Activated B cell treated with CpG ODN at 0.5 μM for 24 hours (primary cell): ENCODE measurements at regions of chr3 and their contacts with region 1.

Region 1: GRCh38 chr3:119240591-119241434 is at the start of gene B4GALT4:
- DNase-seq: peak; percentile 78
- ATAC-seq: peak; percentile 86
- H3K4me3 Mint-ChIP-seq: peak within 1 kb of the TSS; percentile 87
- H3K27ac Mint-ChIP-seq: peak within 1 kb of the TSS; percentile 82
- H3K4me1 Mint-ChIP-seq: peaks cover 36% of the 10 kb centered on the region
- H3K27me3 Mint-ChIP-seq: no peaks in the 10 kb centered on the region
- CTCF ChIP-seq: no peak
- total RNA-seq, gene B4GALT4: 13.8 and 18.0 TPM in 2 replicates

Region 2: GRCh38 chr3:117463276-117464115 is 1777.3 kb before region 1 on chr3:
- CTCF ChIA-PET with region 1: no interaction called
- POLR2A ChIA-PET with region 1: no interaction called
- intact Hi-C with region 1: no loop called
- DNase-seq: no peak
- ATAC-seq: no peak
- H3K4me3 Mint-ChIP-seq: no peak overlapping the region
- H3K27ac Mint-ChIP-seq: no peak overlapping the region
- H3K4me1 Mint-ChIP-seq: no peaks in the 10 kb centered on the region
- H3K27me3 Mint-ChIP-seq: no peaks in the 10 kb centered on the region
- CTCF ChIP-seq: no peak

Region 3: DNA sequence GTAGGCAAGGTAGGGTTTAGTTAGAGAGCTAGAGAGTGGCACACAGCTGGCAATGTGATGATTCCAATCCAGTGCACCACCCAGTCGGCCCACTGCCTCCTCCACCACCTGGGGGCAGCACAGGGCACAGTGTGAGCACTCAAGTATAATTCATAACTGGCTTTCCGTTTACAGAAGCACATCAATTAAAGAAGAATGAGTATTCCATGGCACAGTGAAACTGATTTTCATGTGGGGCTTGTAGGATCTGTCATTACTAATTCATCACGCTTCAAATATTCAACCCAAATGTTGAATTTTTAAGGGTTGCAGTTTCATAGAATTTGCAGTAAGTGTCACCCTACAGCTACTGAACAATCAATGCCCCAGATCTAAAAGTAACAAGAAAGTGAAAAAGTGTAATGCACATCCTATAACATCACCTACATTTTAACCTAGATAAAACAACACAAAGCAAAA is 356.0 kb before region 1 on chr3:
- CTCF ChIA-PET with region 1: interaction called, 49 read pairs
- POLR2A ChIA-PET with region 1: interaction called, 6 read pairs
- intact Hi-C with region 1: loop called (anchors 1 kb)
- DNase-seq: peak; percentile 44
- ATAC-seq: peak; percentile 75
- H3K4me3 Mint-ChIP-seq: no peak overlapping the region
- H3K27ac Mint-ChIP-seq: no peak overlapping the region
- H3K4me1 Mint-ChIP-seq: no peaks in the 10 kb centered on the region
- H3K27me3 Mint-ChIP-seq: peaks cover 20% of the 10 kb centered on the region
- CTCF ChIP-seq: peak; percentile 74

Region 4: GRCh38 chr3:119098619-119099222 is 142.1 kb before region 1 on chr3:
- CTCF ChIA-PET with region 1: no interaction called
- POLR2A ChIA-PET with region 1: no interaction called
- intact Hi-C with region 1: loop called (anchors 1 kb)
- DNase-seq: no peak
- ATAC-seq: no peak
- H3K4me3 Mint-ChIP-seq: no peak overlapping the region
- H3K27ac Mint-ChIP-seq: no peak overlapping the region
- H3K4me1 Mint-ChIP-seq: no peaks in the 10 kb centered on the region
- H3K27me3 Mint-ChIP-seq: peaks cover 2% of the 10 kb centered on the region
- CTCF ChIP-seq: no peak

Region 5: GRCh38 chr3:119257682-119258410 is 17.0 kb after region 1 on chr3:
- CTCF ChIA-PET with region 1: interaction called, 17 read pairs
- POLR2A ChIA-PET with region 1: interaction called, 23 read pairs
- intact Hi-C with region 1: no loop called
- DNase-seq: no peak
- ATAC-seq: peak; percentile 75
- H3K4me3 Mint-ChIP-seq: peak overlapping the region; percentile 11
- H3K27ac Mint-ChIP-seq: no peak overlapping the region
- H3K4me1 Mint-ChIP-seq: peaks cover 22% of the 10 kb centered on the region
- H3K27me3 Mint-ChIP-seq: no peaks in the 10 kb centered on the region
- CTCF ChIP-seq: no peak

Region 6: GRCh38 chr3:119293871-119294695 is 53.3 kb after region 1 on chr3 and contains the start of gene ARHGAP31:
- CTCF ChIA-PET with region 1: interaction called, 4 read pairs
- POLR2A ChIA-PET with region 1: interaction called, 15 read pairs
- intact Hi-C with region 1: loop called (anchors 1 kb)
- DNase-seq: peak; percentile 56
- ATAC-seq: peak; percentile 73
- H3K4me3 Mint-ChIP-seq: peak within 1 kb of the TSS; percentile 88
- H3K27ac Mint-ChIP-seq: peak within 1 kb of the TSS; percentile 90
- H3K4me1 Mint-ChIP-seq: peaks cover 61% of the 10 kb centered on the region
- H3K27me3 Mint-ChIP-seq: no peaks in the 10 kb centered on the region
- CTCF ChIP-seq: no peak
- total RNA-seq, gene ARHGAP31: 23.7 and 26.0 TPM in 2 replicates

Region 7: GRCh38 chr3:119352849-119353502 is 112.2 kb after region 1 on chr3:
- CTCF ChIA-PET with region 1: interaction called, 3 read pairs
- POLR2A ChIA-PET with region 1: interaction called, 22 read pairs
- intact Hi-C with region 1: loop called (anchors 1 kb)
- DNase-seq: no peak
- ATAC-seq: peak; percentile 46
- H3K4me3 Mint-ChIP-seq: peak overlapping the region; percentile 41
- H3K27ac Mint-ChIP-seq: peak overlapping the region; percentile 47
- H3K4me1 Mint-ChIP-seq: peaks cover 47% of the 10 kb centered on the region
- H3K27me3 Mint-ChIP-seq: no peaks in the 10 kb centered on the region
- CTCF ChIP-seq: no peak

Region 8: DNA sequence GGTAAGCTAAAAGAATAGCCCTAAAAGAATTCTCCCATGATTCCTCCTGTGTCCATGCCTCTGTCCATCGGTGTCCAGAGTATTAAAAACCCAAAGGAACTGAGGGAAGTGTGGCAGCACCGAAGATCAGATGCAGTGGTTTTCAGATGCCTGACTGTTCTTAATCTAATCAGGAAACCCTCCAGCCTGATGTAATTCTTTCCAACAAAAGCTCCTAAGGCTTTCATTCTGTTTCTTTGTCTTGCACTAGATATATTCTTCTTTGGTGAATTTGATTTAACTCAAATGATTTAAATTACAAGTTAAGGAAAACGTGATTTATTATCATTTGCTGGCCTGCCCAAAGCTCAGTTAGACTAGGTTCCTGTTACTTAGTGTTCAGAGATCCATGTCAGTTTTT is 124.6 kb after region 1 on chr3:
- CTCF ChIA-PET with region 1: no interaction called
- POLR2A ChIA-PET with region 1: no interaction called
- intact Hi-C with region 1: no loop called
- DNase-seq: no peak
- ATAC-seq: no peak
- H3K4me3 Mint-ChIP-seq: no peak overlapping the region
- H3K27ac Mint-ChIP-seq: no peak overlapping the region
- H3K4me1 Mint-ChIP-seq: peaks cover 3% of the 10 kb centered on the region
- H3K27me3 Mint-ChIP-seq: no peaks in the 10 kb centered on the region
- CTCF ChIP-seq: no peak

Region 9: GRCh38 chr3:120348981-120349818 is 1108.4 kb after region 1 on chr3 and contains the start of gene LRRC58:
- CTCF ChIA-PET with region 1: no interaction called
- POLR2A ChIA-PET with region 1: interaction called, 5 read pairs
- intact Hi-C with region 1: loop called (anchors 2 kb)
- DNase-seq: peak; percentile 90
- ATAC-seq: peak; percentile 92
- H3K4me3 Mint-ChIP-seq: peak within 1 kb of the TSS; percentile 97
- H3K27ac Mint-ChIP-seq: peak within 1 kb of the TSS; percentile 93
- H3K4me1 Mint-ChIP-seq: peaks cover 42% of the 10 kb centered on the region
- H3K27me3 Mint-ChIP-seq: no peaks in the 10 kb centered on the region
- CTCF ChIP-seq: no peak
- total RNA-seq, gene LRRC58: 16.8 and 18.3 TPM in 2 replicates